B cell (primary cell): ENCODE measurements at regions of chr5 and their contacts with region 1.

Region 1: DNA sequence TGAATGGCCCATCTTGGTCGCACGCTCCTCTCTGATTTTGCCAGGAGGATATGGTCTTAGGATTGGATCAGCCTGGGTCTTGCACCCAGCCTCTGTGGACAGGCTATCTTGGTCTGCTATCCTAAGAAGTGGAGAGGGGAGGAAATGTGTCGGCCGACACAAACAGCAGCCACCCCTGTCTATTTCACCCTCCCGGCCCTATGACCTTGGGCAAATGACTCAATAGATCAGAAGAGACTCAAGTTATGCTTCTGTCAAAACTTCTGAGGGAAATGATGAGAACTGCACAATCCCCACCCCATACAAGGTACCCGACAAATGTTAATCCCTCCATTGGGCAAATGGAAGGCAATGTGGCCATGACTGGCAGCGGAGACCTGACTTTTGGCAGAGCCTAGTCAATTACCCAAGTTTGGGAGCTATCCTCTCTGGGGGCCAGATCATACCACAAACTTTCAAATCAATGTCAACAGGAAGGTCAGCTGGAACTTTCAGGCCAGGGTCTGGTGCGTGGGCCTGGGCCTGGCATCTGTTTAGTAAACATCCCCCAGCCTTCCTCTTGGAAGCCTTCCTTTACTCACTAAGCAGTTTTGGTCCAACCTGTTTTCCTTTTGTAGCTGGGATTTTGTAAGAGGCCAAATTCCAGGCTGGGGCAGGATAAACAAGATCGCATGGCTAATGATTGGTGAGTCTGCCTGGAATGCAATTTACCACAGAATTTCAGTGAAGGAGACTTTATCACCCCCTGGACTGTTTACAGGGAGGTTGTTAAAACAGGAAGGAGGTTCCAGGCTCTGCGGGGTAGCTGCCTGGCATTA is 64.2 kb upstream of the CPEB4 start:
- DNase-seq: no peak
- ATAC-seq: no peak
- H3K4me3 ChIP-seq: no peak overlapping the region
- H3K4me3 Mint-ChIP-seq: peak overlapping the region; percentile 9
- H3K27ac ChIP-seq: peak overlapping the region; percentile 12 to 55
- H3K27ac Mint-ChIP-seq: peak overlapping the region; percentile 46
- H3K4me1 ChIP-seq: peaks cover 69 to 73% of the 10 kb centered on the region in 2 donors
- H3K4me1 Mint-ChIP-seq: peaks cover 74% of the 10 kb centered on the region
- H3K27me3 ChIP-seq: no peaks in the 10 kb centered on the region
- H3K27me3 Mint-ChIP-seq: no peaks in the 10 kb centered on the region
- CTCF ChIP-seq: no peak

Region 2: GRCh38 chr5:173689737-173690360 is 134.1 kb before region 1 on chr5:
- CTCF ChIA-PET with region 1: no interaction called
- POLR2A ChIA-PET with region 1: no interaction called
- intact Hi-C with region 1: loop called (anchors 5 kb)
- DNase-seq: peak; percentile 63
- ATAC-seq: peak; percentile 80
- H3K4me3 ChIP-seq: no peak overlapping the region
- H3K4me3 Mint-ChIP-seq: peak overlapping the region; percentile 81
- H3K27ac ChIP-seq: peak overlapping the region; percentile 60 to 64
- H3K27ac Mint-ChIP-seq: peak overlapping the region; percentile 93
- H3K4me1 ChIP-seq: peaks cover 30 to 43% of the 10 kb centered on the region in 2 donors
- H3K4me1 Mint-ChIP-seq: peaks cover 44% of the 10 kb centered on the region
- H3K27me3 ChIP-seq: no peaks in the 10 kb centered on the region
- H3K27me3 Mint-ChIP-seq: no peaks in the 10 kb centered on the region
- CTCF ChIP-seq: peak; percentile 39

Region 3: GRCh38 chr5:173917788-173918786 is 94.2 kb after region 1 on chr5:
- CTCF ChIA-PET with region 1: interaction called, 6 read pairs
- POLR2A ChIA-PET with region 1: interaction called, 4 read pairs
- intact Hi-C with region 1: loop called (anchors 1 kb)
- DNase-seq: peak; percentile 92
- ATAC-seq: peak; percentile 89
- H3K4me3 ChIP-seq: peak overlapping the region; percentile 43 to 81 (median 62)
- H3K4me3 Mint-ChIP-seq: no peak overlapping the region
- H3K27ac ChIP-seq: peak overlapping the region; percentile 82 to 95
- H3K27ac Mint-ChIP-seq: no peak overlapping the region
- H3K4me1 ChIP-seq: peaks cover 18 to 24% of the 10 kb centered on the region in 2 donors
- H3K4me1 Mint-ChIP-seq: peaks cover 22% of the 10 kb centered on the region
- H3K27me3 ChIP-seq: no peaks in the 10 kb centered on the region
- H3K27me3 Mint-ChIP-seq: no peaks in the 10 kb centered on the region
- CTCF ChIP-seq: no peak

Region 4: GRCh38 chr5:174195517-174195916 is 371.6 kb after region 1 on chr5:
- CTCF ChIA-PET with region 1: no interaction called
- POLR2A ChIA-PET with region 1: no interaction called
- intact Hi-C with region 1: no loop called
- DNase-seq: no peak
- ATAC-seq: no peak
- H3K4me3 ChIP-seq: no peak overlapping the region
- H3K4me3 Mint-ChIP-seq: no peak overlapping the region
- H3K27ac ChIP-seq: no peak overlapping the region
- H3K27ac Mint-ChIP-seq: no peak overlapping the region
- H3K4me1 ChIP-seq: no peaks in the 10 kb centered on the region
- H3K4me1 Mint-ChIP-seq: no peaks in the 10 kb centered on the region
- H3K27me3 ChIP-seq: no peaks in the 10 kb centered on the region
- H3K27me3 Mint-ChIP-seq: no peaks in the 10 kb centered on the region
- CTCF ChIP-seq: no peak